Heart right ventricle (tissue), 16 donors: ENCODE measurements at regions of chr18 and their contacts with region 1.

Region 1: DNA sequence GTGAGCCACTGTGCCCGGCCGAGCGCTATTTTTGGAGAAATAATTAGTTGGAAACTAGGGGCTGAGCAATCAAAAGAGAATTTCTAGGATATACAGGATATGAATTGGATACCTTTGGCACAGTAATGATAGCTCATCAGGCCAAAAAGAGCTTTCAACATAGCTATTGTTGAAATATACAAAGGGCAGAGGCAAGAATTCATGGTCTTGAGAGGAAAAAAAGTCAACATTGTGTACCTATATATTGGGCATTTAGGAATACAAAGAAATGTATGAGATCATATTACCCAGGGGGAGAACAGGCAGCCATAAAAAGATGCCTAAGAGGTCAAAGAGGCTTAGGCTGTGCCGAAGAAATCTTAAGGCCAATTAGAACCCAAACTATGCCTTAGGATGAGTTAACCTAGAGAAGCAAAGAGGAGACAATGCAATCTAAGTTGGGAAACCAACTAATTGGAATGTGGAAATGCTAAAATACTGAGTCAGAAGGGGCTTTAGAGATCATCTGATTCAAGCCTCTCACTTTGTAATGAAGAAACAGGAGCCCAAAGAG is 99.0 kb downstream of the RBBP8 start:
- DNase-seq: no peak
- ATAC-seq: no peak
- H3K4me3 ChIP-seq: no peak overlapping the region
- H3K27ac ChIP-seq: peak overlapping the region in 1 of 10 donors; percentile 15
- H3K4me1 ChIP-seq: peaks cover 0 to 13% (median 0%) of the 10 kb centered on the region in 9 donors
- H3K27me3 ChIP-seq: no peaks in the 10 kb centered on the region
- CTCF ChIP-seq: no peak

Region 2: GRCh38 chr18:23106580-23106979 is 74.5 kb after region 1 on chr18:
- intact Hi-C with region 1: loop called in 2 of 10 experiments (anchors 10 kb)
- DNase-seq: no peak
- ATAC-seq: peak in 2 of 8 donors; percentile 37 to 40
- H3K4me3 ChIP-seq: no peak overlapping the region
- H3K27ac ChIP-seq: no peak overlapping the region
- H3K4me1 ChIP-seq: peaks cover 0 to 10% (median 0%) of the 10 kb centered on the region in 9 donors
- H3K27me3 ChIP-seq: peaks cover 0 to 6% (median 0%) of the 10 kb centered on the region in 7 donors
- CTCF ChIP-seq: no peak

Region 3: DNA sequence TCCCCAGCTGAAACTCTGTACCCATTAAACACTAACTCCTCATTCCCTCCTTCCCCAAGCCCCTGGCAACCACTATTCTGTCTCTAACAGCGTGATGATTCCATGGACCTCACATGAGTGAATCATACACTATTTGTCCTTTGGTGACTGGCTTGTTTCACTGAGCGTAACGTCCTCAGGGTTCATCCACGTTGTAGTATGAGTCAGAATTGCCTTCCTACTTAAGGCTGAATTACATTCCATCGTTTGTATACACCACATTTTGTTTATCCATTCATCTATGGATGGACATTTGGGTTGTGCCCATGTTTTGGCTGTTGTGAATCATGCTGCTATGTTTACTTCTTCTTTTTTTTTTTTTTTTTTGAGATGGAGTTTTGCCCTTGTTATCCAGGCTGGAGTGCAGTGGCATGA is 83.6 kb after region 1 on chr18:
- intact Hi-C with region 1: loop called in 1 of 10 experiments (anchors 10 kb)
- DNase-seq: no peak
- ATAC-seq: no peak
- H3K4me3 ChIP-seq: no peak overlapping the region
- H3K27ac ChIP-seq: no peak overlapping the region
- H3K4me1 ChIP-seq: peaks cover 0 to 14% (median 8%) of the 10 kb centered on the region in 9 donors
- H3K27me3 ChIP-seq: peaks cover 0 to 5% (median 0%) of the 10 kb centered on the region in 7 donors
- CTCF ChIP-seq: no peak

Region 4: DNA sequence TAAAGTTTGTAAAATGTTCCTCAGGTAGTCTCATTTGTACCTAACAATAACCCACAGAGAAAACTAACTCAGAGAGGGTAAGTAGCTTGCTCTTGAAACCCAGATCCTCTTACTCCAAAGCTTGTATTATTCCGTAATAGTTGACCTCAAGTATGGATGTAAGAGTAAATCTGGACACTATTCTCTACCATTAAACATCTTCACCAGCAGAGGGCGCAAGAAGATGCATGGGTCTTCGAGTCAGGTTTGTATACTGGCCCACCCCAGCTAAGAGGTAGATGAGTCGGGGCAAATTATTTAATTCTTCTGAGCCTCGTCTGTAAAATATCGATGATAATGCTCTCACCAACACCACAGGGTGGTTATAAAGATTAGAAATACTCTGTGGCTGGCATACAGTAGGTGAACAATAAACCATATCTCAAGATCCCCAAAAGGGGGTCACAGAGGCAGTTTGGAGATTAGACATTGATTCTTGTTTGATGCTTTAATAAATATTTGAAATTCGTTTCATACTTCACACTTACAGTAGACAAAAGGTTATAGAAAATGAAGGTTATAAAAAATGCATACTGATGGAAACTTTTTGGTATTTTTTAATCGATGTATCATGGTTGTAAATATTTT is 99.7 kb after region 1 on chr18:
- intact Hi-C with region 1: no loop called
- DNase-seq: peak in 1 of 2 donors; percentile 81
- ATAC-seq: peak in 7 of 8 donors; percentile 48 to 76 (median 70)
- H3K4me3 ChIP-seq: no peak overlapping the region
- H3K27ac ChIP-seq: no peak overlapping the region
- H3K4me1 ChIP-seq: peaks cover 4 to 39% (median 16%) of the 10 kb centered on the region in 9 donors
- H3K27me3 ChIP-seq: peaks cover 0 to 48% (median 38%) of the 10 kb centered on the region in 7 donors
- CTCF ChIP-seq: peak; percentile 68 to 89 (median 85)

Region 5: DNA sequence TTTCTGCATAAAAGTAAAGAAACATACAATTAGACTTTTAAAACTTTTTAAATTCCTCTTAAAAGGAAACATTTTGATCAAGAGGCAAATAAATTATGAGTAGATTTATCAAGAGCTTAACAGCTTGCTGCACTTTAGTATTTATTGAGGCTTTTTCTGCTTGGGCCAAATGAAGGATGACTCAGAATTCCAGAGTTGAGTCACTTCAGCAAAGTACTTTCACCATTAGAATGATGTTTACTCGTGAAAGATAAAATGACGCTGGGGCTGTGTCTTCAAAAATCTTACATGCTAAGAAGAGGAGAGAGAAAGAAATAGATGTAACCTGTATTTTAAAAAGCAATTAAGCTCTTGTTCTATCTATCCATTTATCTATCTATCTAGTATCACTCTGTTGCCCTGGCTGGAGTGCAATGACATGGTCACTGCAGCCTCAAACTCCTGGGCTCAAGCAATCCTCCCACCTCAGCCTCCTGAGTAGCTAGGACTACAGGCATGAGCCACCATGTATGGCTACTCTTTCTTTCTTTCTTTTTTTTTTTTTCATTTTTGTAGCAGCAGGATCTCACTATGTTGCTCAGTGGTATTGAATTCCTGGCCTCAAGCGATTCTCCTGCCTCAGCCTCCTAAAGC is 345.7 kb after region 1 on chr18:
- intact Hi-C with region 1: loop called in 5 of 10 experiments (anchors 5 to 10 kb)
- DNase-seq: no peak
- ATAC-seq: peak in 5 of 8 donors; percentile 48 to 66 (median 61)
- H3K4me3 ChIP-seq: no peak overlapping the region
- H3K27ac ChIP-seq: peak overlapping the region in 7 of 10 donors; percentile 19 to 56 (median 28)
- H3K4me1 ChIP-seq: peaks cover 0 to 15% (median 6%) of the 10 kb centered on the region in 9 donors
- H3K27me3 ChIP-seq: no peaks in the 10 kb centered on the region
- CTCF ChIP-seq: no peak

Region 6: GRCh38 chr18:23416298-23416697 is 384.2 kb after region 1 on chr18:
- intact Hi-C with region 1: loop called in 2 of 10 experiments (anchors 10 kb)
- DNase-seq: no peak
- ATAC-seq: peak in 7 of 8 donors; percentile 21 to 66 (median 31)
- H3K4me3 ChIP-seq: no peak overlapping the region
- H3K27ac ChIP-seq: peak overlapping the region in 2 of 10 donors; percentile 10 to 44
- H3K4me1 ChIP-seq: peaks cover 0 to 14% (median 0%) of the 10 kb centered on the region in 9 donors
- H3K27me3 ChIP-seq: no peaks in the 10 kb centered on the region
- CTCF ChIP-seq: no peak

Region 7: DNA sequence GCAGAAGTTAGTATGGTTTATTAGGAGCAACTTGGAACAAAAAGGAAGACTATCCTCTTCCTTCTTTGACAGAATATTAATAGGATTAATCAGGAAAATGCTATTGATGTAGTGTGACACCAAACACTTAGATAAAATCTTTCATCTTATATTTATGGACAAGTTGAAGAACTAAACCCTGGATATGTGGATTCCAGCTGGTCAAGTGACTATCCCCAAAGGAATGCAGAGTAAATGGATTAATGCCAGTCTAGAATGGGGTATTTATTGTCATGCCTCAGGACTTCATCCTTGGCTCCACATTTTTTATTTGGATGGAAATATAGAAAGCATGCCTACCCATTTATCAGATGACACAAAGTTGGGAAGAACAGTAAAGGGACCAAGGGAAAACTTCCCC is 858.5 kb after region 1 on chr18:
- intact Hi-C with region 1: loop called in 1 of 10 experiments (anchors 5 kb)
- DNase-seq: no peak
- ATAC-seq: no peak
- H3K4me3 ChIP-seq: no peak overlapping the region
- H3K27ac ChIP-seq: no peak overlapping the region
- H3K4me1 ChIP-seq: peaks cover 0 to 15% (median 6%) of the 10 kb centered on the region in 9 donors
- H3K27me3 ChIP-seq: no peaks in the 10 kb centered on the region
- CTCF ChIP-seq: no peak